ENCODE measurements at regions of chr14 and their contacts with region 1.

Region 1: GRCh38 chr14:55245657-55246268 is 25.5 kb upstream of the FBXO34 start:
- DNase-seq: no peak
- H3K4me3 ChIP-seq: no peak overlapping the region
- CTCF ChIP-seq: peak; percentile 60

Region 2: GRCh38 chr14:55212634-55213033 is 33.1 kb before region 1 on chr14:
- CTCF ChIA-PET with region 1: interaction called, 14 read pairs
- POLR2A ChIA-PET with region 1: no interaction called
- DNase-seq: no peak
- H3K4me3 ChIP-seq: no peak overlapping the region
- CTCF ChIP-seq: no peak

Region 3: GRCh38 chr14:55265197-55265596 is 19.4 kb after region 1 on chr14:
- CTCF ChIA-PET with region 1: interaction called, 101 read pairs
- POLR2A ChIA-PET with region 1: no interaction called
- DNase-seq: no peak
- H3K4me3 ChIP-seq: no peak overlapping the region
- CTCF ChIP-seq: no peak

Region 4: DNA sequence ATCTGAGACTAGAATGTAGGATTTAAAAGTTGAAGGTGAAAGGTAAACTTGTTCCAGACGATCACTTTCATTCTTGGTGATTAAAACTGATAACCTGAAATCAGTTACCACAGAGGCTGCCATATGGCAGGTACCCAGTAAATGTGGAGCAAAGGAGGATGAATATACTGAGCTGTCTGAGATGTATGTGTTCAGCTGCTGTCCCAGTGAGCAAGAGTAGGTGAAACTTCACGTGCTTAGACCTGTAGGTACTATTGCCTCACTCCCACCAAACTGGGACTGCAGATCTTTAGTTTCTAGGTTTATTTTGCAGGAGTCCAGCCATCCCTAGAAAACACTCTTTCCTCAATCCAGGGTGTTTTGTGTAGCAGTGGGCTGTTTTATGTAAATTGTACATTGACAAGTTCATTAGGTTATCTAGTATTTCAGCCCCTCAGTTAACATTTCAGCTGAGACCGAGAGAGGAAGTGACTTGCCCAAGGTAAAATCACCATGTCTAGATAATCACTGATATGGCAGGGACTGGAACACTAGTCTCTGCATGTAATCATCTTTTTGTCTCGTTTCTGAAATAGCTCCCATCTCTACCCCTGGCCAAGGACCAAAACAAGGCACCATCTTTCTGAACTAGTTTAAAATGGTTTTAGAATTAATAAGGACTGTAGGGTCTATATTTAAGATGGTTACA is 103.1 kb after region 1 on chr14:
- CTCF ChIA-PET with region 1: interaction called, 20 read pairs
- POLR2A ChIA-PET with region 1: no interaction called
- DNase-seq: no peak
- H3K4me3 ChIP-seq: no peak overlapping the region
- CTCF ChIP-seq: no peak

Region 5: GRCh38 chr14:55354500-55354899 is 108.7 kb after region 1 on chr14:
- CTCF ChIA-PET with region 1: interaction called, 20 read pairs
- POLR2A ChIA-PET with region 1: no interaction called
- DNase-seq: no peak
- H3K4me3 ChIP-seq: no peak overlapping the region
- CTCF ChIP-seq: peak; percentile 49

Region 6: GRCh38 chr14:55430024-55430690 is 184.4 kb after region 1 on chr14:
- CTCF ChIA-PET with region 1: interaction called, 64 read pairs
- POLR2A ChIA-PET with region 1: no interaction called
- DNase-seq: no peak
- H3K4me3 ChIP-seq: no peak overlapping the region
- CTCF ChIP-seq: peak; percentile 44

Measured in AG04449 (cell line).